Activated naive CD4-positive, alpha-beta T cell treated with anti-CD3 and anti-CD28 coated beads for 36 hours (primary cell): ENCODE measurements at regions of chr2 and their contacts with region 1.

Region 1: DNA sequence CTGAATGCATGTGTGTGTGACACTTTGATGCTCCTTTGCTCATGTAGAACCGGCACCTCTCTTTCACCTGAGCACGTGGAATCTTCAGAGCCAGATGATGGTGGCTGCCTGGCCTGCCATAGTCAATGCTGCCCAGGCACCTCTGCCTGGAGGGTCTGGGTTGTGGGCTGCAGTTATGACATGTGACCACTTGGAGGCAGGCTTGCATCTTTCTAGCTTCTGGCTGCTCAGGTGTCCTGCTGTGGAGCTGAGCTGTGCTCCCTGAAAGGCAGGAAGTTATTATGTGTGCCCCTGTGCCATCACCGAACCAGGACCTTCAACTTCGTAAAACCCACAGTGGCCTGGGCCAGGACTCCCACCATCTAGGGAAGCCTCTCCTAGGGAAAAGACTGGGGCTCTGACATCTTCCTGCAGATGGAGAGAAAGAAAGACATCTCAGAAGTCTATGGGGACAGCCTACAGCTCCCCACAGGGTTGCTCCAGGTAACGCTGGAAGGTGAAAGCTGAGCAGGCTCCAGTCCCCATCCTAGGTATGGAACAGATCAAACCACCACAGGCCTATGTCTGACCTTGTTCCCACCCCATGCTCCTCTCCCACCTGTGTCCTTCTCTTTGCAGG is 30.2 kb downstream of the PSD4 start:
- DNase-seq: peak; percentile 87
- H3K4me3 Mint-ChIP-seq: no peak overlapping the region
- H3K27ac Mint-ChIP-seq: peak overlapping the region; percentile 82
- H3K4me1 Mint-ChIP-seq: peaks cover 15% of the 10 kb centered on the region
- H3K27me3 Mint-ChIP-seq: no peaks in the 10 kb centered on the region

Region 2: DNA sequence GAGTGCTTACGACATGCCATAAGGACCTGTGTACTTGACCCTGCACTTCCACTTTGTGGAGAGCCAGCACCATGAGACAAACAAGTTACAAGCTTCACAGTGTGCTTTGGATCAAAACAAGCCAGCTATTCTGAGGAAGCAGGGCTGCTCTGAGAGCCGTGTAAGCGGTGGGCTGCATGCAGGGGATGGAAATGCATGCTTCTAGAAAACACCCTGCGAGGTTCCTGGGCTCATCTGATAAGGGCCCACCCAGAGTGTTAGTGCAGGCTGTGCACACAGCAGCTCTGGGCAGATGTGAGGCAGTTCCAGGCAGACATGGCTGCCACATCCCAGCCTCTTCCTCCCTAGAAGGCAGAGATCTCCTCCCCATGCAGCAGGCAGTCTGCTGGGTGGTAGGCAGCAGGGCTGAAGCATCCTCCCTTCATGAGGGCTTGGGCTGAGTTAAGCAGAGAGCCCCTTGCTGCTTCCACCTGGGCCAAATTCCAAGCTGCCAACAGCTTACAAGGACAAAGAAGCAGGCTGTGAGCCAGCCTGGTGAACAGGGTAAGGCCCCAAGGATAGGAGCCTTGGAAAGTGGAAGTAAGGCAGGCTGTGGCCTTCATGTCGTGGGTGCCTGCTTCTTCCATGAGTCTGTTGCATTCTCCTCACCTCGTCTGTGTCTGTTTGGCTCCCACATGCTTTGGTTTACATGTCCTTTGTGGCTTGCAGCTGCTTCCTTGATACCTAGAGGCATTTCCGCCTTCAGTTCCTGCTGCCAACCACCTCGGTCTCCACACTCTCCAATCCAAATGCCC is 22.6 kb before region 1 on chr2:
- CTCF ChIA-PET with region 1: interaction called, 21 read pairs
- intact Hi-C with region 1: no loop called
- DNase-seq: no peak
- H3K4me3 Mint-ChIP-seq: no peak overlapping the region
- H3K27ac Mint-ChIP-seq: peak overlapping the region; percentile 77
- H3K4me1 Mint-ChIP-seq: peaks cover 86% of the 10 kb centered on the region
- H3K27me3 Mint-ChIP-seq: no peaks in the 10 kb centered on the region

Region 3: DNA sequence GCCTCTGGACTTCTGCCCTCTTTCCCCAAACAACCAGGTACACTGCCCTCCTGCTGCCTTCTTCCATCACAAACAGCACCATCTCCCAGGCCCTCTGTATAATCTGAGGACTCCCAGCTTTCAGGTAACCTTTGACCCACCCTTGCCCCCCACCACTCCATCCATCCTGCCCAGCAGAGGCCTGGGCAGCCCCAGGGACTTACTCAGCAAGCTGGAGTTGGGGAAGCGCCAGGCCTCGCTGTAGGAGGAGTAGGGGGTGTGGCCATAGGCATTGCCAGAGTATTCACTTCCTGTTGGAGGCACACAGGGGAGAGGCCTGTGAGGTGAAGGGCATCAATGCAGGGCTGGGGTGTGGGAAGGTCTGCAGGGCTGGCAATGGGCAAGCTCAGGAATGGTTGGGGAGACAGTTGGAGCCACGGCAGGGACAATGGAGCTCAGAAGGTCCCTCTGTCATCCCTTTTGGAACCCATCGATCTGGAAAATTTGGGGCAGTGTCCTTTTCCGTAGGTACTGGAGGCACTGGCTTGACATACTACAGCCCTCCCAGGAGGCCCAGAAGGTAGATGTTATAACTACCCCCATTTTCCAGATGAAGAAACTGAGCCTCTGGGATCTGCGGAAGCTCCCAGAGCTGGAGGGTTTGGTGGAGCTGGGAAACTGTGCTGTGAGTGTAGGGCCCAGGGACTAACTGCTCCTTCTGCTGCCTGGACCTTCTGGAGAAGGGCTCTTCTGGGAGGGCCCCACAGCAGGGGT is 16.1 kb after region 1 on chr2:
- CTCF ChIA-PET with region 1: interaction called, 13 read pairs
- intact Hi-C with region 1: no loop called
- DNase-seq: peak; percentile 29
- H3K4me3 Mint-ChIP-seq: no peak overlapping the region
- H3K27ac Mint-ChIP-seq: no peak overlapping the region
- H3K4me1 Mint-ChIP-seq: peaks cover 15% of the 10 kb centered on the region
- H3K27me3 Mint-ChIP-seq: no peaks in the 10 kb centered on the region

Region 4: DNA sequence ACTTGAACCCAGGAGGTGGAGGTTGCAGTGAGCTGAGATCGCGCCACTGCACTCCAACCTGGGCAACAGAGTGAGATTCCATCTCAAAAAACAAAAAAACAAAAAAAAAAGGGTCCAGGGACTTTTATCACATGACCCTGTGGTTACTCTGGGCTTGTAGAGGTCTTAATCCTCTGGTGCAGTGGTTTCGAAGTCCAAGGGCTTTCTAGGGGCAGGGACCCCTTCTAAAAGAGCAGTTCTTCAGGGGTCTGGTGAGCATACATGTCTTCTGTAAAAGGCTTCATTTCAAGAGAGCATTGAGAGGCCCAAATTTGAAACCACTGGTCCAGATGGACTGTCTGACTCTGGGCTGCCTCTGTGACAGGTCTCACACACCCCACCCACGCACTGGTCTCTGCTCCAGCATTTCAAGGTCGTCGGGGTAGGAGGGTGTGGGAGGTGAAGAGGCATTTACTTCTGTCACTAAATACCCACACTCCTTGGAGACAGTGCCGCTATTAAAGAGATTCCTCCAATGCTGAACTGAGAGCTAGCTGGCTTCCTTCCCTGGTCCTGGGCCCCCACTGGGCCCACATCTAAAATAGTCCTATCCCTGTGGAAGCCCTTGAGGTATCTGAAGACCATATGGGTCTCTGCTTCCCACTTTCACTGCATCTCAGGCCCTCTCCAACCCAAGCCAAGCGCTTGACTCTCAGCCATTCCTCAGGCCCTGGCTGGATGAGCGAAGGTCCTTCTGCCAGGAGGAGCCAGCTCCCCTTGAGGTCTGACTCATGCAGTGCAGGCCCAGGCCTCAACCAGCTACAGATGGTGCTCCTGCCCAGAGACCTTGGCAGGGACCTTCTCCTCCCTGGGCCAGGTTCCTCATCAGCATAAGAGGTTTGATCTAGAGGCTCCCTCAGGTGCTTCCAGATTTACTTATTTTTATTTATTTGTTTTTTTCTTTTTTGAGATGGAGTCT is 29.9 kb after region 1 on chr2:
- CTCF ChIA-PET with region 1: interaction called, 10 read pairs
- intact Hi-C with region 1: loop called (anchors 1 kb)
- DNase-seq: peak; percentile 22
- H3K4me3 Mint-ChIP-seq: peak overlapping the region; percentile 14
- H3K27ac Mint-ChIP-seq: no peak overlapping the region
- H3K4me1 Mint-ChIP-seq: peaks cover 34% of the 10 kb centered on the region
- H3K27me3 Mint-ChIP-seq: no peaks in the 10 kb centered on the region

Region 5: GRCh38 chr2:113248997-113249770 is 45.2 kb after region 1 on chr2:
- CTCF ChIA-PET with region 1: interaction called, 6 read pairs
- intact Hi-C with region 1: loop called (anchors 1 kb)
- DNase-seq: peak; percentile 88
- H3K4me3 Mint-ChIP-seq: no peak overlapping the region
- H3K27ac Mint-ChIP-seq: peak overlapping the region; percentile 37
- H3K4me1 Mint-ChIP-seq: peaks cover 48% of the 10 kb centered on the region
- H3K27me3 Mint-ChIP-seq: no peaks in the 10 kb centered on the region

Region 6: DNA sequence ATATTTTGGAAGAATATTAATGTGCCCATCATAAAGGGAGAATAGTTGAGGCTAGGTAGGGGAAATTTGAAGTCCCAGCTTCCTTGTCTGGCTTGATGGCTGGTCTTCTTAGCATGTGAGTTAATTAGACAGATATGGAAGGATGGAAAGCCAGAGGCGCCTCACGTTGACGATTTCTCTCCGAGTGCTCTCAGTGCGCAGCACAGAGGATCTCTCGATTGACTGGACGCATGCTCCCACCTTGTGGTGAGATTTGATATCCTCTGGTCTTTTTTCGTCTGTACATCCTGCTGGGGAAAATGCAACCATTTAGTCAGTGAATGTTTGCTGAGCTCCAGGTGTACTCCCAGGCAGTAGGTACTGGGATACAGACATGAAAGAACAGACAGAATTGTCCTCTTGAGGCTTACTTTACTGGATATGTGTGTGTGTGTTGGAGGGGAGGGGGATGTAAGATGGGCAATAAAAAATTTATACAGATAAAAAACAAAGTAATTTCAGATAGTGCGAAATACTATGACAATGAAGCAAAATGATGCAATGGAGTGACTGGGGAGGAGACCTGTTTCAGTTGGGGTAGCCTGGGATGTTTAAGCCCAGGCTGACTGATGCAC is 166.6 kb after region 1 on chr2:
- CTCF ChIA-PET with region 1: interaction called, 8 read pairs
- intact Hi-C with region 1: loop called (anchors 1 kb)
- DNase-seq: peak; percentile 86
- H3K4me3 Mint-ChIP-seq: no peak overlapping the region
- H3K27ac Mint-ChIP-seq: no peak overlapping the region
- H3K4me1 Mint-ChIP-seq: peaks cover 5% of the 10 kb centered on the region
- H3K27me3 Mint-ChIP-seq: no peaks in the 10 kb centered on the region

Region 7: GRCh38 chr2:113390124-113390849 is 186.3 kb after region 1 on chr2:
- CTCF ChIA-PET with region 1: interaction called, 19 read pairs
- intact Hi-C with region 1: loop called (anchors 5 kb)
- DNase-seq: peak; percentile 70
- H3K4me3 Mint-ChIP-seq: peak overlapping the region; percentile 35
- H3K27ac Mint-ChIP-seq: peak overlapping the region; percentile 61
- H3K4me1 Mint-ChIP-seq: peaks cover 15% of the 10 kb centered on the region
- H3K27me3 Mint-ChIP-seq: peaks cover 3% of the 10 kb centered on the region